CD4-positive, alpha-beta T cell (primary cell): ENCODE measurements at regions of chr6 and their contacts with region 1.

Region 1: DNA sequence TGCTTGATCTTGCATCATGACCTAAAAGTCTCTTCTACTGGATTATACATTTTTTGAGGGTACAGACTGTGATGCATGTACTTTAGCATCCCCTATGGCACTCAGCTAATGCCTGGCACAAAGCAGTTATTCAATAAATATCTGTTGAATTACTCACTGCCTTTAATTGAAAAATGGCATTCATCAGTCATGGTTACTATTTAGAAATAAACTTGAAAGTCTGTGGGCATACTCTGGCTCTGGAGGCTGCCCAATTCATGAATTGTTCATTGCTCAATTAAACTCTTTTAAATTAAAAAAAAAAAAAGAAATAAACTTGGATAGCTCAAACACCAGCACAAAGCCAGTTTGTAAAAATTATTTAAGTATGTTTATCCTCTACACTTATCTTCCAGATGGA is 40.0 kb downstream of the HEBP2 start:
- DNase-seq: no peak
- ATAC-seq: no peak
- H3K4me3 ChIP-seq: no peak overlapping the region
- H3K4me3 Mint-ChIP-seq: no peak overlapping the region
- H3K27ac ChIP-seq: no peak overlapping the region
- H3K27ac Mint-ChIP-seq: no peak overlapping the region
- H3K4me1 ChIP-seq: no peaks in the 10 kb centered on the region
- H3K4me1 Mint-ChIP-seq: no peaks in the 10 kb centered on the region
- H3K27me3 ChIP-seq: no peaks in the 10 kb centered on the region
- H3K27me3 Mint-ChIP-seq: no peaks in the 10 kb centered on the region
- CTCF ChIP-seq: no peak

Region 2: GRCh38 chr6:138428944-138429598 is 14.9 kb before region 1 on chr6:
- CTCF ChIA-PET with region 1: no interaction called
- POLR2A ChIA-PET with region 1: no interaction called
- intact Hi-C with region 1: no loop called
- DNase-seq: peak in 4 of 14 experiments; percentile 36 to 71 (median 66)
- ATAC-seq: peak; percentile 58
- H3K4me3 ChIP-seq: no peak overlapping the region
- H3K4me3 Mint-ChIP-seq: no peak overlapping the region
- H3K27ac ChIP-seq: no peak overlapping the region
- H3K27ac Mint-ChIP-seq: no peak overlapping the region
- H3K4me1 ChIP-seq: peaks cover 3% of the 10 kb centered on the region
- H3K4me1 Mint-ChIP-seq: peaks cover 6% of the 10 kb centered on the region
- H3K27me3 ChIP-seq: no peaks in the 10 kb centered on the region
- H3K27me3 Mint-ChIP-seq: no peaks in the 10 kb centered on the region
- CTCF ChIP-seq: peak; percentile 86

Region 3: DNA sequence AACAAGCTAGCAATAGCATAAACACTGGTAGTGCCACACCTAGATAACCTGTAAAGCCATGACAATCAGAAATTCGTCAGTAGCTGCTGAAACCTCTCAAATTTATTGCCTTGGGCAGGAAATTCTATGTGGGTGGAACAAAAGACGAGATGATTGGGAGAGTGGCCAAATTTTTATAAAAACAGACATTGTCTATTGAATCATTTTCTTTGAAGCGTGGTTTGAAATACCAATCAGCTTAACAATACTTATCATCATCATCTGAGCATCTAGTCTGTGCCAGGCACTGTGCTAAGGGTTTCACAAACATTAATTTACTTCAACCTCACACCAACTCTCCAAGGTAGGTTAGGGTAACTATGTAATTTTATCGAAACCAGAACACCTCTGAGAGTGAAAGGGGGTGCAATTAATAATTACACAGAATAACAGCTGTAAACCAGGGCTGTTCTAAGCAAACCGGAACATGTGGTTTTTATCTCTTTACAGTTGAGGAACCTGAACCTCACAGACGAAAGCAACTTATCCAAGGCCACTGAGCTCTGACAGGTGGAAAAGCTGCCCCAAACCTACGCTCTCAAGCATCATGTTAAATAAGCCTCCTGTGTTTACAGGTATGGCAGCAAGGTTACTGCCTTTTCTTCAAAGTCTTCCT is 11.9 kb after region 1 on chr6:
- CTCF ChIA-PET with region 1: interaction called, 5 read pairs
- POLR2A ChIA-PET with region 1: interaction called, 10 read pairs
- intact Hi-C with region 1: no loop called
- DNase-seq: peak in 10 of 14 experiments; percentile 2 to 84 (median 26)
- ATAC-seq: peak; percentile 74
- H3K4me3 ChIP-seq: peak overlapping the region; percentile 44
- H3K4me3 Mint-ChIP-seq: peak overlapping the region; percentile 82
- H3K27ac ChIP-seq: peak overlapping the region; percentile 43 to 58
- H3K27ac Mint-ChIP-seq: peak overlapping the region; percentile 97
- H3K4me1 ChIP-seq: peaks cover 18% of the 10 kb centered on the region
- H3K4me1 Mint-ChIP-seq: peaks cover 32% of the 10 kb centered on the region
- H3K27me3 ChIP-seq: no peaks in the 10 kb centered on the region
- H3K27me3 Mint-ChIP-seq: no peaks in the 10 kb centered on the region
- CTCF ChIP-seq: no peak

Region 4: GRCh38 chr6:138461647-138462046 is 17.7 kb after region 1 on chr6:
- CTCF ChIA-PET with region 1: interaction called, 5 read pairs
- POLR2A ChIA-PET with region 1: interaction called, 3 read pairs
- intact Hi-C with region 1: loop called in 1 of 2 experiments (anchors 2 kb)
- DNase-seq: no peak
- ATAC-seq: no peak
- H3K4me3 ChIP-seq: no peak overlapping the region
- H3K4me3 Mint-ChIP-seq: no peak overlapping the region
- H3K27ac ChIP-seq: no peak overlapping the region
- H3K27ac Mint-ChIP-seq: no peak overlapping the region
- H3K4me1 ChIP-seq: peaks cover 4% of the 10 kb centered on the region
- H3K4me1 Mint-ChIP-seq: peaks cover 9% of the 10 kb centered on the region
- H3K27me3 ChIP-seq: no peaks in the 10 kb centered on the region
- H3K27me3 Mint-ChIP-seq: no peaks in the 10 kb centered on the region
- CTCF ChIP-seq: no peak